ENCODE measurements at regions of chrX and their contacts with region 1.

Region 1: GRCh38 chrX:45309801-45310200 is 109.1 kb upstream of the DIPK2B start:
- DNase-seq: no peak
- ATAC-seq: no peak
- H3K4me3 ChIP-seq: no peak overlapping the region
- H3K27ac ChIP-seq: no peak overlapping the region
- H3K4me1 ChIP-seq: no peaks in the 10 kb centered on the region
- H3K27me3 ChIP-seq: no peaks in the 10 kb centered on the region

Region 2: GRCh38 chrX:45515262-45516215 is 205.7 kb after region 1 on chrX:
- intact Hi-C with region 1: loop called in 1 of 2 experiments (anchors 10 kb)
- DNase-seq: peak; percentile 73 to 82
- ATAC-seq: peak; percentile 79
- H3K4me3 ChIP-seq: no peak overlapping the region
- H3K27ac ChIP-seq: no peak overlapping the region
- H3K4me1 ChIP-seq: peaks cover 0 to 1% of the 10 kb centered on the region in 2 donors
- H3K27me3 ChIP-seq: no peaks in the 10 kb centered on the region

Measured in aorta (tissue), 5 donors.